CD8-positive, alpha-beta memory T cell (primary cell): ENCODE measurements at regions of chr1 and their contacts with region 1.

Region 1: DNA sequence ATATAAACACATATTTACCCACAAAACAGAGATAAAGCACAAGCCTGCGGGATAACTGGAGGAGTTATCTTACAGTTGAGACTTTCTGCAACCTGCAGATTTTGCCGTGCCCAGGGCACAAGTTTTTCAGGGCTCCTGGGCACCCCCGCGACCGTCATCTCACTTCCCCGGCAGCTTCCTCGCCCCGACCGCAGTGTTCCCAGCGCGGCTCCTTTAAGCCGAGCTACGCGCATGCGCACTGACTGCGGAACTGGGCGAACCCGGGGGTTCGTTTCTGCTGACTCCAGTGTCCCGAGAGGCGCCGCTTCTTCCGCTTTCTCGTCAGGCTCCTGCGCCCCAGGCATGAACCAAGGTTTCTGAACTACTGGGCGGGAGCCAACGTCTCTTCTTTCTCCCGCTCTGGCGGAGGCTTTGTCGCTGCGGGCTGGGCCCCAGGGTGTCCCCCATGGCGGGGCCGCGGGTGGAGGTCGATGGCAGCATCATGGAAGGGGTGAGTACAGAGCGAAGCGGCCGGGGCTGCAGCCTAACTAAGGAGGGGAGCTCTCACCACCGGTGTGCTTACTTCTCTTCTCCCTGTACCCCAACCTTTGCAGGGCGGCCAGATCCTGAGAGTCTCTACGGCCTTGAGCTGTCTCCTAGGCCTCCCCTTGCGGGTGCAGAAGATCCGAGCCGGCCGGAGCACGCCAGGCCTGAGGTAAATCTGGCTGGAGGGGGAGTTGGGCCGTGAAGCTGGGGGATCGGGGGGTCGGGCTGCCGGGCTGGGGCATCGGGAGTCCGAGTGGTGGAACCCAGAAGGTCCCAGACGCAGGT is at the start of gene RTCA:
- DNase-seq: peak; percentile 93 to 98 (median 95)
- H3K4me3 ChIP-seq: peak within 1 kb of the TSS; percentile 97
- H3K4me3 Mint-ChIP-seq: peak within 1 kb of the TSS; percentile 94 to 100 (median 100)
- H3K27ac ChIP-seq: peak within 1 kb of the TSS; percentile 93
- H3K27ac Mint-ChIP-seq: peak within 1 kb of the TSS; percentile 80 to 98 (median 98)
- H3K4me1 ChIP-seq: peaks cover 36% of the 10 kb centered on the region
- H3K4me1 Mint-ChIP-seq: peaks cover 45 to 60% (median 54%) of the 10 kb centered on the region in 3 donors
- H3K27me3 ChIP-seq: no peaks in the 10 kb centered on the region
- H3K27me3 Mint-ChIP-seq: peaks cover 0 to 4% of the 10 kb centered on the region in 2 donors
- total RNA-seq, gene RTCA: 64.5 to 68.3 TPM

Region 2: GRCh38 chr1:100249537-100250257 is 16.4 kb before region 1 on chr1 and contains the start of gene DBT:
- CTCF ChIA-PET with region 1: interaction called, 6 read pairs
- POLR2A ChIA-PET with region 1: interaction called, 11 read pairs
- DNase-seq: peak; percentile 85 to 94 (median 91)
- H3K4me3 ChIP-seq: peak within 1 kb of the TSS; percentile 99
- H3K4me3 Mint-ChIP-seq: no peak within 1 kb of the TSS
- H3K27ac ChIP-seq: peak within 1 kb of the TSS; percentile 89
- H3K27ac Mint-ChIP-seq: peak within 1 kb of the TSS in 2 of 8 donors; percentile 18 to 25
- H3K4me1 ChIP-seq: peaks cover 14% of the 10 kb centered on the region
- H3K4me1 Mint-ChIP-seq: peaks cover 17 to 20% (median 20%) of the 10 kb centered on the region in 3 donors
- H3K27me3 ChIP-seq: no peaks in the 10 kb centered on the region
- H3K27me3 Mint-ChIP-seq: no peaks in the 10 kb centered on the region
- total RNA-seq, gene DBT: 13.6 to 13.9 TPM